ENCODE measurements at regions of chr9 and their contacts with region 1.

Region 1: GRCh38 chr9:35664531-35665470 is at the start of gene ARHGEF39:
- DNase-seq: no peak
- H3K4me3 ChIP-seq: peak within 1 kb of the TSS; percentile 71
- CTCF ChIP-seq: peak; percentile 31

Region 2: DNA sequence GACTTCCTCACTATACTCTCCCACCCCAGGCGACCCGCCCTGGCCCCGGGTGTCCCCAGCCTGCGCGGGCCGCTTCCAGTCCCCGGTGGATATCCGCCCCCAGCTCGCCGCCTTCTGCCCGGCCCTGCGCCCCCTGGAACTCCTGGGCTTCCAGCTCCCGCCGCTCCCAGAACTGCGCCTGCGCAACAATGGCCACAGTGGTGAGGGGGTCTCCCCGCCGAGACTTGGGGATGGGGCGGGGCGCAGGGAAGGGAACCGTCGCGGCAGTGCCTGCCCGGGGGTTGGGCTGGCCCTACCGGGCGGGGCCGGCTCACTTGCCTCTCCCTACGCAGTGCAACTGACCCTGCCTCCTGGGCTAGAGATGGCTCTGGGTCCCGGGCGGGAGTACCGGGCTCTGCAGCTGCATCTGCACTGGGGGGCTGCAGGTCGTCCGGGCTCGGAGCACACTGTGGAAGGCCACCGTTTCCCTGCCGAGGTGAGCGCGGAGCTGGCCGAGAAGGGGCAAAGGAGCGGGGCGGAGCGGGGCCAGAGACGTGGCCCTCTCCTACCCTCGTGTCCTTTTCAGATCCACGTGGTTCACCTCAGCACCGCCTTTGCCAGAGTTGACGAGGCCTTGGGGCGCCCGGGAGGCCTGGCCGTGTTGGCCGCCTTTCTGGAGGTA is 11.1 kb after region 1 on chr9:
- CTCF ChIA-PET with region 1: interaction called, 41 read pairs
- POLR2A ChIA-PET with region 1: interaction called, 11 read pairs
- DNase-seq: no peak
- H3K4me3 ChIP-seq: peak overlapping the region; percentile 56
- CTCF ChIP-seq: peak; percentile 37